CD14-positive monocyte (primary cell): ENCODE measurements at regions of chr15 and their contacts with region 1.

Region 1: DNA sequence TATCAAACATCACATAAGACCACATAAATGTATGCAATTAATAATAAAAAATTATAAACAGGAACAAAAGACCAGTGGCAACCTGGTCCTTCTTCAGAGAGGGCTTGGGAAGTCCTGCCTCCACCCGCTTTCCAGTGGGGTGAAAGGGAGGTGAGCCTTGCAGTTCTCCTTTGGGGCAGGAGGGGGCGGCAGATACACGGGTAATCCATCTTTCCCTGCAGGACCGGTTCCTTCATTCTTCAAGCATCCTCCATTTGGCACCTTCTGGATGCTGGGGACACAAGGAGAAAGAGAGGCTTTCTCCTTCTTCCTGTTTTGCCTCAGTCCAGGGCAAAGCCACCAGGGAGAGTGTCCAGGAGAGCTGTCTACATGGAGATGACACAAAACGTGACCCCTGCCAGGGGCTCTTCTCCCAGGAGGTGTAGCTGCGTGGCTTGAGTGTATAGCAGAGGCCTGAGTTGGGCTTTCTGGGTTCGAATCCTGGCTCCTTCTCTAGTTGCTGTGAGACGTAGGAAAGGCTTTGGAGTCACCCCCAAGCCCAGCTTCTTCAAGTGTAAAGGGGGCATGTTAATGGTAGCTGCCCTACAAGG is 23.2 kb downstream of the RPLP1 start:
- DNase-seq: peak; percentile 63 to 74 (median 66)
- H3K4me3 ChIP-seq: no peak overlapping the region
- H3K4me3 Mint-ChIP-seq: no peak overlapping the region
- H3K27ac ChIP-seq: no peak overlapping the region
- H3K27ac Mint-ChIP-seq: no peak overlapping the region
- H3K4me1 ChIP-seq: no peaks in the 10 kb centered on the region
- H3K4me1 Mint-ChIP-seq: peaks cover 4% of the 10 kb centered on the region
- H3K27me3 ChIP-seq: no peaks in the 10 kb centered on the region
- H3K27me3 Mint-ChIP-seq: peaks cover 4 to 7% (median 5%) of the 10 kb centered on the region in 3 donors
- CTCF ChIP-seq: peak; percentile 97

Region 2: DNA sequence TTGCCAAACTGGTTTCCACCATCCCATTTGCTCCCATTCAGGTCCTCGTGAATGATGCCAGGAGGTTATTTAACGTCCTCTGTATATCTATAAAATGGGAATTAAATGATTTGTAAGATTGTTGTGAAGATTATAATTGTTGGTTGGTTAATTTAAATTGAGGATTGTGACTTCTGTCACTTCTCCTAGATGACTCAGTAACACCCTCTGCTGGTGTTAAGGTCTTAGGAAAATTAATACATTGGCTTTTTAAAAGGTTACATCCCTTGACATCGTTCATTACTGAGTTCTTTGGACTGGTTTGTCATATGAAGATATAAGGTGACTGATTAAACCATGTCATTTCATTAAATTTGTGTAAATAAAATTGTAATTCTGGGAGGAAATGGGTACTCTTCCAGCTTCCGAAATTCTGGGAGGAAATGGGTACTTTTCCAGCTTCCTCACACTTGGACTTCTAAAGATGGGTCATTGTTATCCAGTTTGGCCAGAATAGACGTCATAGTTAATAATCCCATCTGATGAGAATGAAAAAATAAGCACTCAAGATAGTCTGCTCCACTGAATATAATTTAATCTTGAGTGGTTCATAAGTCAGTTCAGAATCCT is 210.4 kb before region 1 on chr15:
- intact Hi-C with region 1: no loop called
- DNase-seq: peak in 1 of 3 donors; percentile 12
- H3K4me3 ChIP-seq: no peak overlapping the region
- H3K4me3 Mint-ChIP-seq: no peak overlapping the region
- H3K27ac ChIP-seq: no peak overlapping the region
- H3K27ac Mint-ChIP-seq: no peak overlapping the region
- H3K4me1 ChIP-seq: no peaks in the 10 kb centered on the region
- H3K4me1 Mint-ChIP-seq: peaks cover 7% of the 10 kb centered on the region
- H3K27me3 ChIP-seq: no peaks in the 10 kb centered on the region
- H3K27me3 Mint-ChIP-seq: no peaks in the 10 kb centered on the region
- CTCF ChIP-seq: peak; percentile 44

Region 3: GRCh38 chr15:70062321-70062956 is 586.6 kb after region 1 on chr15:
- intact Hi-C with region 1: loop called in 1 of 2 experiments (anchors 10 kb)
- DNase-seq: no peak
- H3K4me3 ChIP-seq: no peak overlapping the region
- H3K4me3 Mint-ChIP-seq: no peak overlapping the region
- H3K27ac ChIP-seq: no peak overlapping the region
- H3K27ac Mint-ChIP-seq: no peak overlapping the region
- H3K4me1 ChIP-seq: no peaks in the 10 kb centered on the region
- H3K4me1 Mint-ChIP-seq: peaks cover 3% of the 10 kb centered on the region
- H3K27me3 ChIP-seq: no peaks in the 10 kb centered on the region
- H3K27me3 Mint-ChIP-seq: peaks cover 0 to 3% (median 2%) of the 10 kb centered on the region in 3 donors
- CTCF ChIP-seq: no peak

Region 4: DNA sequence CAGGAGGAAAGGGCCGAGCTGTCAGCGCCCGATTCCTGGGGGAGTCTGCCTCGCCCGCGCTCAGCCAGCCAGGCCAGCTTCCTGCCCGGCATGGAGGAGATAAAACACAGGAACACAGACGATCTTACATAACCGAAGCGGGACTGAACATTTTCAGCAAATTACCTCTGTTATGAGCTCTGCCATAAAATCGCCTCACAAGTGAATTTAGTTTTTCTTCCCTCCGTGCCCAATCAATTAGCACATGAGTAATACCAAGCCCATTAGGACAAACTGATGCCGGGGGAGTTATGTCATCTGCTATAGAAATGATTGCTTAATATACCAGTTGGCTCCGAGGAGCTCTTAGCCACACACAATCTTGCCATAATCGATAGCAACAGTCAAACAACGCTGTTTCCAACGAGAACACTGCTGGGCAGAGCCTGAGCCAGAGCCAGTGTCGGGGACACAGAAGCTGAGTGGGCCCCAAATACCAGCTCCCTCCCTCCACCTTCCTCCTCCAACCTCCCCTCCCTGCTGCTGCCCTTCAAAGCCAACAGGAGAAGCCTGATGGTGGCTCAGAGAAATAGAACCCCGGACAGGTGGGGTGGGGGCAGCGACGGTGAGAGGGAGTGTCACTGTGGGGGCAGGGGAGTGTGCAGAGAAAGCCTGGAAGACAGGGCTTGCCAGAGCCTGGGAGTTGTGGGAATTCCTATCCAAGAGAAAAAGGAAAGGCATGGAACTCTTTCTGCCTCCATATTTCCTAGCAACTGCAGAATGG is 901.2 kb after region 1 on chr15:
- intact Hi-C with region 1: loop called in 1 of 2 experiments (anchors 10 kb)
- DNase-seq: peak; percentile 50 to 55 (median 55)
- H3K4me3 ChIP-seq: peak overlapping the region in 1 of 3 experiments; percentile 46
- H3K4me3 Mint-ChIP-seq: peak overlapping the region; percentile 40 to 71
- H3K27ac ChIP-seq: no peak overlapping the region
- H3K27ac Mint-ChIP-seq: peak overlapping the region in 2 of 7 donors; percentile 22 to 37
- H3K4me1 ChIP-seq: peaks cover 10% of the 10 kb centered on the region in 2 donors
- H3K4me1 Mint-ChIP-seq: peaks cover 25% of the 10 kb centered on the region
- H3K27me3 ChIP-seq: peaks cover 0 to 8% of the 10 kb centered on the region in 2 donors
- H3K27me3 Mint-ChIP-seq: peaks cover 17 to 36% (median 28%) of the 10 kb centered on the region in 3 donors
- CTCF ChIP-seq: no peak

Region 5: DNA sequence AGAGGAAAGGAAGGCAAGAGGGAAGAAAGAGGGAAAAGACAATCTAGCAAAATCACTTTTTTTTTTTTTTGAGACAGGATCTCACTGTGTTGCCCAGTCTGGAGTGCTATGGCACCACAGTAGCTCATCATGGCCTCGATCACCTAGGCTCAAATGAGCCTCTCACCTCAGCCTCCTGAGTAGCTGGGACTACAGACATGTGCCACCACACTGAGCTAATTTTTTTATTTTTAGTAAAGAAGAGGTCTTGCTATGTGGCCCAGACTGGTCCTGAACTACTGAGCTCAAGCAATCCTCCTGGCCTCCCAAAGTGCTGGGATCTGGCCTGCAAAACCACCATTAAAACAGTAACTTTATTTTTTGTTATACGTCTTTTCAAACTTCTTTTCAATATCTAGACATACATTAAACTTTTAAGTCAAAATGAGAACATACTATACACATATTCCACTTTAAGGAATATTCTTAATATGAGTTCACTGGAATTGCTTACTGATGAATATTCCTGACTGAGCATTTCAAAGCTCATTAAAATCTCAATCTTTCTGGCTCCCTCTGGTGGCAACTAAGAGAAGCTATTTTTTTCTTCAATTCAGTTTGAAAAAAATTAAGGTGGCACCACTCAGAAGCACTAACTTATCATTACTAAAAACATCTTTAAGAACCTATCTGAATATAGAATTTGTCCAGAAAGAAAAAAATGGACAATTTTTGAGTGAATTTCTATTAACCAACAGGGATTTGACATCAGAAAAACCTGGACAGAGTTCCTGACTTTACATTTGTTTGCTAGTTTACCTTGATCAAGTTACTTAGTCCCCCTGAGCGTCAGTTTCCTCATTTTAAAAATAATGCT is 1246.6 kb after region 1 on chr15:
- intact Hi-C with region 1: loop called (anchors 10 kb)
- DNase-seq: peak; percentile 7 to 40 (median 36)
- H3K4me3 ChIP-seq: no peak overlapping the region
- H3K4me3 Mint-ChIP-seq: no peak overlapping the region
- H3K27ac ChIP-seq: no peak overlapping the region
- H3K27ac Mint-ChIP-seq: no peak overlapping the region
- H3K4me1 ChIP-seq: no peaks in the 10 kb centered on the region
- H3K4me1 Mint-ChIP-seq: peaks cover 1% of the 10 kb centered on the region
- H3K27me3 ChIP-seq: peaks cover 0 to 5% of the 10 kb centered on the region in 2 donors
- H3K27me3 Mint-ChIP-seq: peaks cover 0 to 14% (median 2%) of the 10 kb centered on the region in 3 donors
- CTCF ChIP-seq: peak; percentile 80

Region 6: GRCh38 chr15:70815644-70816043 is 1339.8 kb after region 1 on chr15:
- intact Hi-C with region 1: loop called (anchors 5 to 10 kb)
- DNase-seq: no peak
- H3K4me3 ChIP-seq: no peak overlapping the region
- H3K4me3 Mint-ChIP-seq: no peak overlapping the region
- H3K27ac ChIP-seq: no peak overlapping the region
- H3K27ac Mint-ChIP-seq: no peak overlapping the region
- H3K4me1 ChIP-seq: no peaks in the 10 kb centered on the region
- H3K4me1 Mint-ChIP-seq: peaks cover 2% of the 10 kb centered on the region
- H3K27me3 ChIP-seq: no peaks in the 10 kb centered on the region
- H3K27me3 Mint-ChIP-seq: peaks cover 0 to 3% (median 0%) of the 10 kb centered on the region in 3 donors
- CTCF ChIP-seq: no peak